GM12878 (cell line): ENCODE measurements at regions of chr5 and their contacts with region 1.

Region 1: GRCh38 chr5:61658592-61659008 is 326.5 kb downstream of the ZSWIM6 start:
- DNase-seq: peak; percentile 21
- ATAC-seq: peak; percentile 97
- H3K4me3 ChIP-seq: no peak overlapping the region
- H3K27ac ChIP-seq: no peak overlapping the region
- H3K4me1 ChIP-seq: no peaks in the 10 kb centered on the region
- H3K27me3 ChIP-seq: no peaks in the 10 kb centered on the region; a peak in 3 of 4 replicates
- CTCF ChIP-seq: peak; percentile 88 to 95 (median 93)
- EP300 ChIP-seq: no peak
- POLR2A ChIP-seq: no peak
- RAD21 ChIP-seq: peak; percentile 89

Region 2: GRCh38 chr5:60960591-60960990 is 698.0 kb before region 1 on chr5:
- CTCF ChIA-PET with region 1: interaction called, 21 read pairs
- POLR2A ChIA-PET with region 1: no interaction called
- RAD21 ChIA-PET with region 1: interaction called, 8 read pairs
- SMC1A ChIA-PET with region 1: interaction called, 8 read pairs
- in situ Hi-C with region 1: loop called (anchors 10 kb)
- intact Hi-C with region 1: loop called (anchors 2 kb)
- DNase-seq: no peak
- ATAC-seq: peak; percentile 38; the same call in 1 of the 3 replicates
- H3K4me3 ChIP-seq: no peak overlapping the region
- H3K27ac ChIP-seq: no peak overlapping the region
- H3K4me1 ChIP-seq: no peaks in the 10 kb centered on the region; the same call in 1 of the 2 replicates
- H3K27me3 ChIP-seq: no peaks in the 10 kb centered on the region
- CTCF ChIP-seq: peak; percentile 42 to 55 (median 48)
- EP300 ChIP-seq: no peak
- POLR2A ChIP-seq: no peak
- RAD21 ChIP-seq: peak; percentile 56

Region 3: DNA sequence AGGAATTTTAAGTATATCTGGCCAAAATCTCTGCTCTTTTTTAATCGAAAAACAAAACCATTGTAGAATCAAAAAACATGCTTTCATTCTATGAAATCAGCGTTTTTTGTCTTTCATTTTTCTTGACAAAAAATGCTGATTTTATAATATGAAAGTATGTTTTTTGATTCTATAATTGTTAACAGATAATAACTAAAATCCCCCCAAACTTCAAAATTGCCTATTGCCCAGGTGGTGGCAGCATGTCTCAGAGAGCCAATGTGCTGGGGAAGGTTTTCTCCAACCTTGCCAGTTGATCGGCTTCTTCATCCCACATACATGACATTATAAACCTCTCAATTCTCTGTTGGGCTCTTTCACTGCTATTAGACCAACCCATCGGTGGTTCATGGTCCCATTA is 491.2 kb before region 1 on chr5:
- CTCF ChIA-PET with region 1: interaction called, 14 read pairs
- POLR2A ChIA-PET with region 1: no interaction called
- RAD21 ChIA-PET with region 1: interaction called, 3 read pairs
- SMC1A ChIA-PET with region 1: interaction called, 9 read pairs
- in situ Hi-C with region 1: no loop called
- intact Hi-C with region 1: loop called (anchors 2 kb)
- DNase-seq: no peak
- ATAC-seq: peak; percentile 33
- H3K4me3 ChIP-seq: no peak overlapping the region
- H3K27ac ChIP-seq: no peak overlapping the region
- H3K4me1 ChIP-seq: no peaks in the 10 kb centered on the region; the same call in 1 of the 2 replicates
- H3K27me3 ChIP-seq: no peaks in the 10 kb centered on the region
- CTCF ChIP-seq: peak; percentile 31 to 73 (median 37); a peak in 5 of 6 replicates
- EP300 ChIP-seq: no peak
- POLR2A ChIP-seq: no peak
- RAD21 ChIP-seq: peak; percentile 84

Region 4: GRCh38 chr5:61631438-61631941 is 27.1 kb before region 1 on chr5:
- CTCF ChIA-PET with region 1: no interaction called
- POLR2A ChIA-PET with region 1: no interaction called
- RAD21 ChIA-PET with region 1: no interaction called
- SMC1A ChIA-PET with region 1: no interaction called
- in situ Hi-C with region 1: no loop called
- intact Hi-C with region 1: no loop called
- DNase-seq: no peak
- ATAC-seq: no peak
- H3K4me3 ChIP-seq: no peak overlapping the region
- H3K27ac ChIP-seq: no peak overlapping the region
- H3K4me1 ChIP-seq: no peaks in the 10 kb centered on the region
- H3K27me3 ChIP-seq: peaks cover 4 to 6% of the 10 kb centered on the region in 2 experiments
- CTCF ChIP-seq: no peak
- EP300 ChIP-seq: no peak
- POLR2A ChIP-seq: no peak
- RAD21 ChIP-seq: no peak

Region 5: DNA sequence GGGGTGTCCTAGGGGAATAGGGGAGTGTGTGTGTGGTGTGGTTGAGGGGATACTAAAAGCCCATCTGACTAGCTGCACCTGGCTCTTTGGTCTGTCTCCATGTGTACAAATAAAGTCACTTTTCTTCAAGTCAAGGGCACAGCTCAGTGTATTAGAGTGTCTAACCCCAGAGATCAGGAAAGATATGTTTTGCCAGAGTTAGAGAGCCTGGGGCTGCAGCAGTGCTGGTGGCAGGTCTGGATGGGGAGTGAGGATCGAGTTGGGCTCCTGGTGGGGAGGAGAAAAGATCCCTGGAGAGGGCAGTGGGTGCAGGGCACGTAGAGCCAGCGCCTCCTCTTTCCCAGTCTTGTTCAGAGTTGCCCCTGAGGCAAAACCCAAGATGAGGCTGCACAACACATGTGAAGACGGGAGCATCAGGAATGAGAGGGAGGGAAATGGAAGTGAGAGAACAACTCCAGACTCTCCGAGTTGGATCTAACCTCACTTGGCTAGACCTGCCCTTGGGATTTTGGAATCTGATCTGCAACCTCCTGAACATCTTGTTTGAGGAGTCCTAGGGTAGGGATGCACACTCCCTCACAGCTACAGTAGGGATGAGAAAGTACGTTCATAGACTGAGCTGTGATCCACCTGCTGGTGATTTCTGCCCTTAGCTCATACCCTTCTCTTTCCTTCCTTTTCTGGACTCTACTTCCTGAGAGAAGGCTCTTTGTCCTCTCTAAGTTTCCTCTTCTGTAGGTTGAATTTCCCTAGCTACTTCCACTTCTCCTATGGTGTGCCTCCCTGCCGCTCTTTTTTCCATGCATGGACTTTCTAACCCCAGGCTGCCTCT is 16.6 kb before region 1 on chr5:
- CTCF ChIA-PET with region 1: interaction called, 11 read pairs
- POLR2A ChIA-PET with region 1: no interaction called
- RAD21 ChIA-PET with region 1: no interaction called
- SMC1A ChIA-PET with region 1: interaction called, 10 read pairs
- in situ Hi-C with region 1: no loop called
- intact Hi-C with region 1: no loop called
- DNase-seq: no peak
- ATAC-seq: 0 out of 3 replicates have a peak, but pooled peaks have one; percentile 25
- H3K4me3 ChIP-seq: no peak overlapping the region
- H3K27ac ChIP-seq: no peak overlapping the region
- H3K4me1 ChIP-seq: no peaks in the 10 kb centered on the region
- H3K27me3 ChIP-seq: peaks cover 0 to 2% of the 10 kb centered on the region in 2 experiments; a peak in 2 of 4 replicates
- CTCF ChIP-seq: 0 out of 6 replicates have a peak, but pooled peaks of 1 of the 3 experiments have one; percentile 5
- EP300 ChIP-seq: no peak
- POLR2A ChIP-seq: no peak
- RAD21 ChIP-seq: peak; percentile 6; the same call in 1 of the 2 replicates

Region 6: GRCh38 chr5:61673007-61673735 is 14.6 kb after region 1 on chr5:
- CTCF ChIA-PET with region 1: interaction called, 14 read pairs
- POLR2A ChIA-PET with region 1: no interaction called
- RAD21 ChIA-PET with region 1: no interaction called
- SMC1A ChIA-PET with region 1: interaction called, 3 read pairs
- in situ Hi-C with region 1: no loop called
- intact Hi-C with region 1: no loop called
- DNase-seq: no peak
- ATAC-seq: peak; percentile 38
- H3K4me3 ChIP-seq: no peak overlapping the region
- H3K27ac ChIP-seq: no peak overlapping the region
- H3K4me1 ChIP-seq: no peaks in the 10 kb centered on the region
- H3K27me3 ChIP-seq: no peaks in the 10 kb centered on the region; a peak in 1 of 4 replicates
- CTCF ChIP-seq: no peak
- EP300 ChIP-seq: no peak
- POLR2A ChIP-seq: no peak
- RAD21 ChIP-seq: no peak